Tibial artery (tissue), 4 donors: ENCODE measurements at regions of chr3 and their contacts with region 1.

Region 1: DNA sequence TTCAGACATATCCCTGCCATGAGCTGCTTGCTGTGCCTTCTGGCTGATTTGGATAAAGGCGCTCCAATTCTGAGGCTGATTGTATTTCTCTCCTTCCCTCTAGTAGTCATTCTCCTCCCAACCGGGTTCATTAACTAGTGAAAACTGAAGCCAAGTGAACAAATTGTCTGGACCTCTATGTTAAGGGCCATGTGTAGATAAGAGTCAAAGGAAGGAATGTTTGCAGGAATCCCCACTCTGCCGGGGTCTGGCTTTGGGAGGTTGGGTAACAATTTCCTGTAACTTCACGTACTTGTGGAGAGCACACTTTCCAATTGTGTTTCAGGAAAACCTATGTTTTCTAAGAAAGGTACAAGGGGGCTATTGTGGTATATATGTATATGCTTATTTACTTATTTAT is 38.2 kb upstream of the SUCLG2 start:
- DNase-seq: no peak
- H3K4me3 ChIP-seq: no peak overlapping the region
- H3K27ac ChIP-seq: no peak overlapping the region
- H3K4me1 ChIP-seq: no peaks in the 10 kb centered on the region
- H3K27me3 ChIP-seq: no peaks in the 10 kb centered on the region
- CTCF ChIP-seq: no peak

Region 2: GRCh38 chr3:67617518-67617917 is 75.1 kb before region 1 on chr3:
- intact Hi-C with region 1: no loop called
- DNase-seq: no peak
- H3K4me3 ChIP-seq: no peak overlapping the region
- H3K27ac ChIP-seq: no peak overlapping the region
- H3K4me1 ChIP-seq: peaks cover 0 to 11% (median 5%) of the 10 kb centered on the region in 4 donors
- H3K27me3 ChIP-seq: no peaks in the 10 kb centered on the region
- CTCF ChIP-seq: no peak

Region 3: GRCh38 chr3:68025189-68025588 is 332.6 kb after region 1 on chr3:
- intact Hi-C with region 1: loop called (anchors 10 kb)
- DNase-seq: no peak
- H3K4me3 ChIP-seq: no peak overlapping the region
- H3K27ac ChIP-seq: no peak overlapping the region
- H3K4me1 ChIP-seq: no peaks in the 10 kb centered on the region
- H3K27me3 ChIP-seq: no peaks in the 10 kb centered on the region
- CTCF ChIP-seq: no peak